ENCODE measurements at regions of chr2 and their contacts with region 1.

Region 1: GRCh38 chr2:192162392-192163042 is 32.2 kb downstream of the TMEFF2 start:
- DNase-seq: peak; percentile 78
- ATAC-seq: peak; percentile 78
- H3K4me3 Mint-ChIP-seq: no peak overlapping the region
- H3K27ac Mint-ChIP-seq: no peak overlapping the region
- H3K4me1 Mint-ChIP-seq: peaks cover 7% of the 10 kb centered on the region
- H3K27me3 Mint-ChIP-seq: peaks cover 15% of the 10 kb centered on the region
- CTCF ChIP-seq: peak; percentile 85

Region 2: DNA sequence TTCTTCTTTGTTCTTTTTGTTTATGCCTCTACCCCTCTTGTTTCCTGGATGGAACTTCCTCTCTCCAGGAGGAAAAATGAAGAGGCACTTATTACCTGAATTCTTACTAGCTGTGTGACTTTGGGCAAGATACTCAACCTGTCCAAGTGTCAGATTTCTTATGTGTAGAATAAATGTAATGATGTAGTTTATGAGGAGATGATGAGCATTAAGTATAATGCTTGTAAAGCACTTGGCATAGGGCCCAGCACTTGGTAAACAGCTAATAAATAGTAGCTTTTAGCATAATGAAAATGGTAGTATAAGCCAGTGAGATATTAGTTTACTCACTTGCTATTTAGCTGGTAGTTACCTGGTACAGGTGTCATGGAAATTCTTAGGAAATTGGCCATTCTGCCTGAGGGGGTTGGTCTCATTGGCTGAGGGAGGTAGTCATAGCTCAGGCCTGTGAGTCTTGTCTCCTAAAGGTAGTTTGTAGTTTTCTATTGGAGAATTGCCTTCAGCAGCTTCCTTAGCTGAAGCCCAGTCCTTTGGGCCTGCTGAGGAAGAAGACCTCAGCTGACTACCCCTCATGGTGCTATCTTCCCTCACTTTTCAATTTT is 618.0 kb before region 1 on chr2:
- CTCF ChIA-PET with region 1: interaction called, 10 read pairs
- POLR2A ChIA-PET with region 1: no interaction called
- intact Hi-C with region 1: no loop called
- DNase-seq: no peak
- ATAC-seq: no peak
- H3K4me3 Mint-ChIP-seq: no peak overlapping the region
- H3K27ac Mint-ChIP-seq: no peak overlapping the region
- H3K4me1 Mint-ChIP-seq: no peaks in the 10 kb centered on the region
- H3K27me3 Mint-ChIP-seq: no peaks in the 10 kb centered on the region
- CTCF ChIP-seq: no peak

Region 3: DNA sequence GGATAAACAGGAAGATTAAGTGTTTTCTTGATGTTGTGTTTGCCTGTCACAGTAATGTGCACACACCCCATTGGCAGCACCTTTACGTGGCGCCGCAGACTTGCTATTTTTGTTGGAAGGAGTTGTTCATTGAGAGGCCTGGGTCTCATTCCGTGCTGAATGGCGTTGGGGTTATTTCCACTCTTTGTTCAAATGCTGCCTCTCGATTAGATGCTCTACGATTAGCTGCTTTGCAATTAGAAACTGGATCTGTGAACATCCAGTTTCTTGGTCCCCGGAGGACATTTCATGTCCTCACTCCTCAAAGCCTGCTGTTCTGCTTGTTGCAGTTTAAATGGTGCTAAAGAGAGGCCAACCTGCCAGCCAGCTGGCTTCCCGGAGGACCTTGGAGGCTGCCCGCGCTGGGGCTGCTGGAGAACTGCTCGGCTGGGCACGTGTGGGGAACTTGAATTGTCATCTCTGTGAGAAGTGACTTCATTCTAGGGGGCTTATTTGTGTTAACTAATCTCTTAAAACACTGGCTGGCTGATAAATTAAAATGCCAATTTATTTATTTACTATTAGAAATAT is 602.0 kb before region 1 on chr2:
- CTCF ChIA-PET with region 1: interaction called, 103 read pairs
- POLR2A ChIA-PET with region 1: interaction called, 3 read pairs
- intact Hi-C with region 1: loop called (anchors 2 kb)
- DNase-seq: no peak
- ATAC-seq: no peak
- H3K4me3 Mint-ChIP-seq: no peak overlapping the region
- H3K27ac Mint-ChIP-seq: no peak overlapping the region
- H3K4me1 Mint-ChIP-seq: peaks cover 3% of the 10 kb centered on the region
- H3K27me3 Mint-ChIP-seq: peaks cover 21% of the 10 kb centered on the region
- CTCF ChIP-seq: no peak

Region 4: DNA sequence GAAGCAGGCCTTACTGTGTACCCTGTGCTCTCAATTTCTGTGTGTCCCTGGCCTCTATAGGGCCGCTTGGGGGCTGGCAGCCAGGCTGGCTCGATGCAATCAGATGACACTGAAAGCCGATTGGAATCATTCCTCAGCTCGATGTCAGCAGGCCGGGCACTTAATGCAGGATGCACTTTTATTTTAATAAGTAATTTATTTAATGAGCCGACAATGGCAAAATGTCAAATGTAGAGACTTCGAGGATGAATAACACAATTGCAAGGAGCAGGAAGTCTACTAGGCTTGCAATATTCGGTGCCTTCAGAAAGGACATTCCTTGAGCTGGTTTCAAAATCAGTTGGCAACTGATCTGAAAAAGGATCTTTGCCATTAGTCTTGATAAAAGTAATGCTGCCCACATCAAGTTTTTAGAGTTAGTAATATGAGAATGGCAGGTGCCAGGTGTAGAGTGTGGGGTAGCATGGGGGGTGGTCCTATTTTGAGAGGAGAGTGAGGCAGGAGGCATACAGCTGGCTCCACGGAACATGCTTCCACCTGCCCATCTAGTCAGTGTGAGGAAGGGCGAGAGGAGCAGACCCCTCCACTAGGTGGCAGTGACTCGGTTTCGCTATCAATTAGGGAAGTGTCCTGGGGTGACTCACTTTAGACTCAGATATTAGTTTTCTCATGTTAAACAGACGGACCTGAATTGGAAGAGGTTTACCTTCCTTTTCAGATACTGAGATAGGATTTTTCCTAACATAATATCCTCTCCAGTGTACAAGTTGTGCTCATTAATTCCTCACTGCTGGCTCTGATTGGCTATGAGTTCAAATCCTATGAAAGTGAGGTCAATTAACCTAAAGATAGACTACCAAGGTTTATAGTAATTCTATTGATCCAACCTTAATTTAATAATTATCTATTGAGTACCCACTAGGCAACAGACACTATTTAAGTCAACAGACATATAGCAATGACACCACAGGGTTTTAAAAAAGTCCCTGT is 403.7 kb before region 1 on chr2:
- CTCF ChIA-PET with region 1: interaction called, 13 read pairs
- POLR2A ChIA-PET with region 1: no interaction called
- intact Hi-C with region 1: no loop called
- DNase-seq: peak; percentile 73
- ATAC-seq: peak; percentile 100
- H3K4me3 Mint-ChIP-seq: no peak overlapping the region
- H3K27ac Mint-ChIP-seq: no peak overlapping the region
- H3K4me1 Mint-ChIP-seq: peaks cover 5% of the 10 kb centered on the region
- H3K27me3 Mint-ChIP-seq: peaks cover 11% of the 10 kb centered on the region
- CTCF ChIP-seq: peak; percentile 69

Region 5: GRCh38 chr2:191811807-191812602 is 350.5 kb before region 1 on chr2:
- CTCF ChIA-PET with region 1: interaction called, 64 read pairs
- POLR2A ChIA-PET with region 1: no interaction called
- intact Hi-C with region 1: loop called (anchors 2 kb)
- DNase-seq: peak; percentile 52
- ATAC-seq: no peak
- H3K4me3 Mint-ChIP-seq: no peak overlapping the region
- H3K27ac Mint-ChIP-seq: no peak overlapping the region
- H3K4me1 Mint-ChIP-seq: no peaks in the 10 kb centered on the region
- H3K27me3 Mint-ChIP-seq: peaks cover 12% of the 10 kb centered on the region
- CTCF ChIP-seq: peak; percentile 63

Region 6: GRCh38 chr2:192194866-192195547 is 32.5 kb after region 1 on chr2 and contains the start of gene TMEFF2:
- CTCF ChIA-PET with region 1: interaction called, 12 read pairs
- POLR2A ChIA-PET with region 1: no interaction called
- intact Hi-C with region 1: no loop called
- DNase-seq: peak; percentile 67
- ATAC-seq: peak; percentile 80
- H3K4me3 Mint-ChIP-seq: peak within 1 kb of the TSS; percentile 69
- H3K27ac Mint-ChIP-seq: no peak within 1 kb of the TSS
- H3K4me1 Mint-ChIP-seq: peaks cover 18% of the 10 kb centered on the region
- H3K27me3 Mint-ChIP-seq: peaks cover 60% of the 10 kb centered on the region
- CTCF ChIP-seq: no peak
- total RNA-seq, gene TMEFF2: not detected